Dendritic cell treated with granulocyte-macrophage colony-stimulating factor and Interleukin-4, amounts not matched to agents 40 ng/mL and 50 ng/mL, for 4 days (primary cell): ENCODE measurements at regions of chr2 and their contacts with region 1.

Region 1: GRCh38 chr2:68487773-68488355 is 20.5 kb downstream of the APLF start:
- H3K4me3 Mint-ChIP-seq: no peak overlapping the region
- H3K27ac Mint-ChIP-seq: no peak overlapping the region
- H3K4me1 Mint-ChIP-seq: peaks cover 10% of the 10 kb centered on the region
- H3K27me3 Mint-ChIP-seq: no peaks in the 10 kb centered on the region

Region 2: DNA sequence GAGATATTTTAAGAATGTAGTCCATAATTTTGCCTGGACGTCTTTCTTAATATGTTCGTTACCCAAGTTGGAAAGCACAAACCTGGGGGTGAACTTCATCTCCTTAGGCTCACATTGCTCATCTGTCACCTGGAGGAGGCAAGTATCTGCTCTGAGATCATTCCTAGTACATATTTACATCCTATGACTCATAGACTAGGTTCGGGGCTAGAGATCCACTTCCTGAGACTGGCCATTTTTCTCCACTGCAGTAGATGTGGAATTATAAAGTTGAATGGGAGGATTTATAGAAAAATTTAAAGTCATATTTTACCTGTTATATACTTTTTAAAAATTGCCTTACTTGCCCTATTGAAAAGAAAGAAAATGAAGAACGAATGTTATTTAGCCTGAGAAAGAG is 78.0 kb after region 1 on chr2:
- intact Hi-C with region 1: no loop called
- H3K4me3 Mint-ChIP-seq: no peak overlapping the region
- H3K27ac Mint-ChIP-seq: no peak overlapping the region
- H3K4me1 Mint-ChIP-seq: no peaks in the 10 kb centered on the region
- H3K27me3 Mint-ChIP-seq: no peaks in the 10 kb centered on the region

Region 3: DNA sequence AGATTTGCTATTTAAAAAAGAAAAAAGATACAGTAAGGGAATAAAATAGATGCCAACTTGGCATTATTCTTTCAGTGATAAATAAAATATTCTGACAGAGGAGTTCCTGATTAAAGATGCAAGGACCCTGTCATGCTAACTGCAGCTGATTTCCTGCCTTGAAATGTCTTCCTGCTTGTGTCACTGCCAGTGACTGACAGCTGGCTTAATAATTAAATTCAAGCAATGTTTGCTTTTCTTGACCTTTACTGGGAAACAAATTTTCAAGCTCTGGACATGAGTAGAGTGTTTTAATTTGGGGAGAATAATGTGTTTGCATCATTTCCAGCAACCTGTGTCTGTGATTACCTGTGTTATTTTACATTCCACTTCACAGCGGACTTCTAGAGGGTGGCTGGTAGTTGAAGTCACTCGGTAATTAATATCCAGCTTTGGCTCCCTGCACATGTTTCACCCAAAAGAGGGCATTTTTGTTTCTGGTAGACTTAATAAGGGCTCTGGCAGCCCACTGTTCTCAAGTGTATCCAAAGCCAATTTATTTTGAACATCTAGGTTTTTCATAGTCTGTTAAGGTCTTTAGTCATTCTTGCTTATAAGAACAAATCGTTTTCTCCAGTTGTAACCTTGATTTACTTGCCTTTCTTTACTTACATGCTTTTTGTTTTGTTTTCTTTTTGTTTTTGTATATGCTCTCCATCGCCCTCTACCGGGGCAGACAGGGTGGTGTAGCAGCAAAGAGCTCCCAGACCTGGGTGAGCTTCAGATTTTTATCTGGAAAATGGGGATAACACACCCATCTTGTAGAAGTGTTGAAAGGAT is 107.0 kb after region 1 on chr2:
- intact Hi-C with region 1: loop called (anchors 5 kb)
- H3K4me3 Mint-ChIP-seq: no peak overlapping the region
- H3K27ac Mint-ChIP-seq: no peak overlapping the region
- H3K4me1 Mint-ChIP-seq: peaks cover 15% of the 10 kb centered on the region
- H3K27me3 Mint-ChIP-seq: no peaks in the 10 kb centered on the region